Activated T-helper 2 cell treated with anti-CD3 and anti-CD28 coated beads, Interferon-gamma antibody, Interleukin-2, Interleukin-4, amounts not matched to agents 10 μg/mL and 5 μg/mL and 100 μg/mL, durations not matched to agents 14 hours and 24 hours and 36 hours (primary cell): ENCODE measurements at regions of chr20 and their contacts with region 1.

Region 1: GRCh38 chr20:39019805-39020325 is 57.7 kb downstream of the DHX35 start:
- DNase-seq: no peak
- H3K4me3 Mint-ChIP-seq: peak overlapping the region; percentile 14
- H3K27ac Mint-ChIP-seq: peak overlapping the region; percentile 73
- H3K4me1 Mint-ChIP-seq: peaks cover 65% of the 10 kb centered on the region
- H3K27me3 Mint-ChIP-seq: no peaks in the 10 kb centered on the region

Region 2: DNA sequence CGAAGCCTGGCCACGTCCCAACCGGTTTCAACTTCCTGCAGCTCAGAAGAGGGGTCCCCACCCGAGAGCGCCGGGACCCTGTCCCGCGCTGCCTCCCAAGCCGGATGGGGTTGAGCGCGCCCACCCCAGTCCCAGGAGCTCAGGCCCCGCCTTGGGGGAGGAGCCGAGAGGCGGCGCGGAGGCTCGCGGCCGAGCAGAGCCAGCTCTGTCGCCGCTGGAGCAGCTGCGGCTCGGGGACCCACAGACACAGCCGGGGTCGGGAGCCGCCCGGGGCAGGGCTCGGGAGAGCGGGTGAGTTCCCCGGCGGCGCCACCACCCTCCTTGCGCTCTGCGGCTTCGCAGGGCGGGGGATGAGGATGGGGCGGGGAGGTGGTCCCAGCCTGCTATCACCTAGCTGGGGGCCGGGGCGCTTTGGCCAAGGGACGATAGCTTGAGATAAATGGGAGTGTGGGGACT is 214.3 kb before region 1 on chr20 and contains the start of gene PPP1R16B:
- intact Hi-C with region 1: loop called (anchors 1 kb)
- DNase-seq: peak; percentile 78
- H3K4me3 Mint-ChIP-seq: peak within 1 kb of the TSS; percentile 91
- H3K27ac Mint-ChIP-seq: peak within 1 kb of the TSS; percentile 98
- H3K4me1 Mint-ChIP-seq: peaks cover 48% of the 10 kb centered on the region
- H3K27me3 Mint-ChIP-seq: no peaks in the 10 kb centered on the region
- total RNA-seq, gene PPP1R16B: 109 and 111 TPM in 2 replicates

Region 3: DNA sequence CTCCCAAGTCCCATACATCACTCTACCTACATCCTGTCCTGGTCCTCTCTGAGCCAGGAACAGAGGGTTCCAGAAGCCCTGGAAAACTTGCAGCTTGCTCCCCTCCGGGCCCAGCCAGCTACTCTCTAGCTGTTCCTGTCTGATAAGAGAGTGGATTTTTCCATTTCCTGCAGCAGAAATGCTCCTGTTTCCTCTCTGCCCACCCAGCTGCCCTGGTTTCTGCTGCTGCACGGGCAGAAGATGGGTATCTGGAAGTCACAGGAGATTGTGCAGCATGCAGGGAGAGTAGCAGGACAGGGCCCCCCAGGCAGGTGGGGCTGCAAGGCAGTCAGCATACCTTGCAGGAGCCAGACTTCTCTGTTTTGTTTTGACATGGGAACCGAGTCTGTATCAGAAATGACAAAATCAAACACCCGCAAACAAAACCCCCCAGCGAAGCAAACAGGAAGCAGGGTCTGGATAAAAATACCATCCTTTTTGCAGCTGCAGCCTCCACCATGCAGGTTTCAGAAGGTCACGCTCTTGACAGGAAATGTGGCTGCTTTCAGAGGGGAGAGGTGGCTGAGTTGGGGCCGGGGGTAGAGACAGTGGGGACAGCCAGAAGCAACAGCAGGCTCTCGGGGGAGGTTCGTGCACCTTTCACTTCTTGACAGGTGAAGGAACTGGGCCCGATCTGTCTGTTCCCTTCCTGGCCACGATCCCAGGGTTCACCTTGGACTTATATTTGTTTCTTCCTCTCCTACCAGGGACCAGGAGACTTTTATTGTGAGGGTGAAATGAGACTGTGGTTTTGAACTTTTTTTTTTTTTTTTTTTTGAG is 144.5 kb before region 1 on chr20:
- intact Hi-C with region 1: loop called (anchors 5 kb)
- DNase-seq: peak; percentile 55
- H3K4me3 Mint-ChIP-seq: peak overlapping the region; percentile 43
- H3K27ac Mint-ChIP-seq: peak overlapping the region; percentile 95
- H3K4me1 Mint-ChIP-seq: peaks cover 71% of the 10 kb centered on the region
- H3K27me3 Mint-ChIP-seq: no peaks in the 10 kb centered on the region

Region 4: DNA sequence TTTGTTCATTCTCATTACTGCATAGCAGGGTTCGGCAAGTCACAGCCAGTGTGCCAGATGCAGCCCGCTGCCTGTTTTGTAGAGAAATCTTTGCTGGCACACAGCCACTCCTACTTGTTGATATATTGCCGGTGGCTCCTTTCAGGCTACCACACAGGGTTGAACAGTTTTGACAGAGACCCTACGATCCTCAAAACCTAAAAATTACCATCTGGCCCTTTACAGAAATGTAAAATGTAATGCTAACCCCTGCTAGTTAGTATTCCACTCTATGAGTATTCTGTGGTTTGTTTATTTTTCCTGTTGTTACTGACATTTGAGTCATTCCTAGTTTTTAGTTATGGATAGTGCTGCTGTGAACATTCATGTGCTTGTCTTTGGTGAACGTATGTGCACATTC is 46.2 kb before region 1 on chr20:
- intact Hi-C with region 1: loop called (anchors 2 kb)
- DNase-seq: no peak
- H3K4me3 Mint-ChIP-seq: no peak overlapping the region
- H3K27ac Mint-ChIP-seq: no peak overlapping the region
- H3K4me1 Mint-ChIP-seq: peaks cover 21% of the 10 kb centered on the region
- H3K27me3 Mint-ChIP-seq: no peaks in the 10 kb centered on the region

Region 5: DNA sequence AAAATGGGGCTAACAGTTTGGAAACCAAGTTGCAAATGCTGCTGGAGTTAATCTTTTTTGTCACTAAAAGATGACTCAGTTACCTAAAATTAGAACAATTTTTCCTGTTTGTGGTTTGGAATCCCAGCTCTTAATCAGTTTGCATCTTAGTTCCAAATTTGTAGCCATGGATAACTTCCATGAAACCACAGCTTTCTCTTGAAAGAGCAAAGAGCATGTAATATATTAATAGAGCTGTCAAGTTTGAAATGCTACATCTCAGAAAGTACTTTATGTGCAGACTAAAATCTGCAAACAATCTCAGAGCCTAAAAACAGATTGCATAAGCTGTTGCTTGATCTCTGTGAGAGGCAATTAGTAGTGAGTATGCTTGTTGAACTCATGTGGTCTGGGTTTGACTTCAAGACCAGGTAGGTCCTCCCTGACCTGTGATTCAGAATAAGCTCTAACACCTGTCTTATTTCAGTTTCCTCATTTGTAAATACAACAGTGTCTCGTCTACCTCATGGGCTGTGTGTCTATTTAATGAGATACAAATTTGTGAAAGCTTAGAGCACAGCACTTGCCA is 34.2 kb before region 1 on chr20:
- intact Hi-C with region 1: no loop called
- DNase-seq: no peak
- H3K4me3 Mint-ChIP-seq: no peak overlapping the region
- H3K27ac Mint-ChIP-seq: no peak overlapping the region
- H3K4me1 Mint-ChIP-seq: peaks cover 21% of the 10 kb centered on the region
- H3K27me3 Mint-ChIP-seq: no peaks in the 10 kb centered on the region

Region 6: DNA sequence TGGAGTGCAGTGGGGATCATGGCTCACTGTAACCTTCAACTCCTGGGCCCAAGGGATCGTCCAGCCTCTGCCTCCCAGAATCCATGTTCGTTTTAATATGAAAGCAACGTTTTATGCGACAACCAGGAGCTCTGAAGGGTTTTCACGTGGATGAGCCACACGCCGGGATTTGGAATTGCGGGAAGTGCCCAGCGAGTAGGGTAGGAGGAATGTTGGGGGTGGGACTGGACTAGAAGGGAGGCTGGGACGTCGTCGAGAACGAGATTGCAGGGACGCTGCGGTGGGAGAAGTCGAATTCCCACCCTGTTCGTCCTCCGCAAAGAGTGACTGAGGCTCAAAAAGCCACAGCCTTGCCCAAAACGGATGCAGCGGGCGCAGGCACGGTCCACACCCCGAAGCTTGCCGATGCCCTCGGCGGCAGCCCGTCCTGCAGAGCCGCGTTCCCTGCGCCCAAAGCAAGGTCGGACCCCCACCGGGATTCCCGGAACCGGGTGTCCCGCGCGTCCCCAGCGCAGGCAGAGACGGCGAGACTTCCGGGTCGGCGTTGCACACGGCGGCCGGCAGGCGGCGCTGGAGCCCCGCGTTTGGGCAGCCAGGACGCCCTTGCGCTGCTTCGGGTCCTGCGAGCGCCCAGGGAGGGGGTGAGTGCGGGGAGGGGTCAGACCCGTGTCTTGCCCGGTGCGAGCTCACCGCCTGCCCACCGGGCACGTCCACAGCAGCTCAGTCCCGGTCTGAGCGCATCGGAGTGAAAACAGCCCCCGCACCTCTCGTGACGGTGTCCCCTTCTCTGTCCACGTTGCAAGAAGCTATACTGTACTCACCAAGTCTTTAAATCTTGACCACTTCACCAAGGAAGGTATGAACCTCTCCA is 30.1 kb after region 1 on chr20:
- intact Hi-C with region 1: loop called (anchors 2 kb)
- DNase-seq: peak; percentile 75
- H3K4me3 Mint-ChIP-seq: peak overlapping the region; percentile 83
- H3K27ac Mint-ChIP-seq: peak overlapping the region; percentile 68
- H3K4me1 Mint-ChIP-seq: peaks cover 3% of the 10 kb centered on the region
- H3K27me3 Mint-ChIP-seq: peaks cover 12% of the 10 kb centered on the region